A549 (cell line): ENCODE measurements at regions of chr22 and their contacts with region 1.

Region 1: GRCh38 chr22:22201185-22201929 is 43.2 kb upstream of the VPREB1 start:
- DNase-seq: peak; percentile 30 to 48
- ATAC-seq: peak; percentile 72 to 85; a peak in 4 of 6 replicates
- H3K4me3 ChIP-seq: no peak overlapping the region
- H3K27ac ChIP-seq: no peak overlapping the region
- H3K4me1 ChIP-seq: no peaks in the 10 kb centered on the region
- CTCF ChIP-seq: peak; percentile 52
- EP300 ChIP-seq: no peak
- POLR2A ChIP-seq: no peak
- RAD21 ChIP-seq: 0 out of 5 replicates have a peak, but pooled peaks of 1 of the 2 experiments have one; percentile 8

Region 2: GRCh38 chr22:22185844-22186499 is 15.4 kb before region 1 on chr22:
- CTCF ChIA-PET with region 1: interaction called, 27 read pairs
- POLR2A ChIA-PET with region 1: no interaction called
- DNase-seq: no peak
- ATAC-seq: no peak
- H3K4me3 ChIP-seq: no peak overlapping the region
- H3K27ac ChIP-seq: no peak overlapping the region
- H3K4me1 ChIP-seq: peaks cover 9% of the 10 kb centered on the region; the same call in 1 of the 3 replicates
- CTCF ChIP-seq: no peak
- EP300 ChIP-seq: no peak
- POLR2A ChIP-seq: no peak
- RAD21 ChIP-seq: no peak

Region 3: DNA sequence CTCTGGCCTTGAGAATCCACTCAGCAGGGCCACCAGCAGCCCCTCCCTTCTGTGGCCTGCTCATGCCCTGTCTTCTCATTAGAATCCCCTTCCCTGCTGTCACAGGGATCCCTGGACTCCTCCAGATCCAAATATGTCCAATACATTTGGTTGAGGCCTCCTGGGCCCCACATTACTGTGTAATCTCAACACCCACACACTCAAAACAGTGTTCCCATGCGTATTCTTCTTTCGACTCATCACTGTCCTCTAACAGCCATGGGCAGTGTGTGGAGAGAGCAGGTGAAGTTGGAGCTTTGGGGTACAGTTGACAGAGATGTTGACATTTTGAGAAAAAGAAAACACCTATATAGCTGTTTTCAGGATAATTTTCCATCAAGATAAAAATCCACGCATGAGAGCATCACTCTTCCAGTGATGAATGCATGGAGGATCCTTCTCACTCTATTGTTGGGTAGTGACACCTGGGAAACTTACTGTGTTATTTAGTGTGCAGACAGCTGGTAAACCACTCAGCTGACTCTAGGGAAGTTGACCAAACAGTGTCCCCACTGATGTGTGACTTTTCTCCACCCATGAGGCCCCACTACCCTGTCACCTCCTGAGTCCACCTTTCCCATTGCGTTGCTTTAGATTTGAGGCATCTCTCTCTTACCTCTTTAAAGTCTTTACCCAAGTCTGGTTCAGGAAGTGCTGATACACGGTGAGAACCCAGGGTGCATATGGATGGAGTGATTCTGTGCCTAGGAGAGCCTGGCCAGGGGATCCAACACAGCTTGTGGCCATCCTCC is 14.5 kb after region 1 on chr22:
- CTCF ChIA-PET with region 1: interaction called, 34 read pairs
- POLR2A ChIA-PET with region 1: no interaction called
- DNase-seq: no peak
- ATAC-seq: no peak
- H3K4me3 ChIP-seq: no peak overlapping the region
- H3K27ac ChIP-seq: no peak overlapping the region
- H3K4me1 ChIP-seq: no peaks in the 10 kb centered on the region; the same call in 2 of the 3 replicates
- CTCF ChIP-seq: no peak
- EP300 ChIP-seq: no peak
- POLR2A ChIP-seq: no peak
- RAD21 ChIP-seq: no peak

Region 4: DNA sequence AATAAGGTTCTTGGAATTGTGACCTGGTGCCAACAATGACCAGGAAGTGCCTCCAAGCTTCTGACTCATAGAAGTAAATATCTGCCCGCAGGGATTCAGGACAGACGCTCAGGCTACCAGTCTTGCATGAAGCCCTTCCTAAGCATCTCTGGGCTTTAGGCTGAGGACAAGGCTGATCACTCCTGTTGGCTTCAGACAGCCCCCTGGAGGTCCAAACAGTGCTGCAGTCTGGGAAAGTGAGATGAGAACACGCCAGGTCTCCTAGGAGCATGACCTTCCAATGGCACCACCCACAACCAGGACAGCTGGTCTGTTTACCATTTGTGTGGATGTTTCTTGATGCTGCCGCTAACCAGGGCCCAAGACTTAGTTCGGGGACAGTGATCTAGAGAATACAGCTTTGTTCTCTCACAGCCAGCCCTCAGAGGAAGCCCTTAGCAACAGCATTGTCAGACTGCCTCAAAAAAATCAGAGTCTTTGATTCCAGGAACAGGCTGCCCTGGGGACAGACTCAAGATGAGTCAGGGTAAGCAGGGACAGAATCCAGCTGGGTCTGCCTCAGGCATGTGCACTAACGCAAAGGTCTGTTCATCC is 196.0 kb after region 1 on chr22:
- CTCF ChIA-PET with region 1: no interaction called
- POLR2A ChIA-PET with region 1: no interaction called
- DNase-seq: peak; percentile 37 to 61
- ATAC-seq: peak; percentile 80 to 95
- H3K4me3 ChIP-seq: no peak overlapping the region
- H3K27ac ChIP-seq: peak overlapping the region; percentile 49 to 51; a peak in 5 of 6 replicates
- H3K4me1 ChIP-seq: peaks cover 12% of the 10 kb centered on the region
- CTCF ChIP-seq: 0 out of 3 replicates have a peak, but pooled peaks have one; percentile 9
- EP300 ChIP-seq: no peak
- POLR2A ChIP-seq: no peak
- RAD21 ChIP-seq: no peak